ENCODE measurements at regions of chr10 and their contacts with region 1.

Region 1: DNA sequence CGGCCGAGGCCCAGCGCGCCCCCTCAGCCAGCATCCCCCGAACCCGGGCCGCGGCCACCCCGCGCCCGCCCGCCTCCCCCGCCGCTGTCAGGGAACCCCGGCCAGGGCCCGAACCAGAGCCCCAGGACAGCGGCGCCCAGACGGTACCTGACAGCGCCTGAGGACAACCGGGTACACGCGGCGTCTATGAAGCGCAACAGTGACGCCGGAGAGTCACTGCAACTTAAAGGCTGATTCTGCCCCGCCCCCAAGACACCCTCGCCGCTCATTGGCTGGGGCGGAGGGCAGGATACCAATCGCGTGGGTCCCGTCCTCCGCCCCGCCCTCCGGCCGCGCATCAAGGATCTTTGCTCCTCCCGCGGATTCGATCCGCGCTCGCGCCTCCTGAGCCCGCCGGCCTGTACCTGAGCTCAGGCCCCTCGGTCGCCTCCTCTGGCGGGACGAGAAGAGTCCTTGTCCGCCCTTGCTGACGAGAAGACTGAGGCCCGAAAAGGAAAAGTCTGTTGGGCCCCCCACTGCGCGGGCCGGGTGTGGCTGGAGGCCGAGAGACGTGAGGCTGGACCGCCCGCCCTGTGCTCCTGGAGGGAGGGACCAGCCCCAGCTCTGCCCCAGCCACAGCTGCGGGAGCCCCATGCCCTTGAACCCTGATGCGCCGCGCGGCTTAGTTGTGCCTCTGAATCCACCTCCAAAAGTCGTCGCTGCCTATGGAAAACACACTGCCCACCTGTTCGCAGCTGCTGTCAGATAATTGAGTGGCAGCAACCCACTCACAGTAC is at the start of gene OAT:
- DNase-seq: peak; percentile 99
- ATAC-seq: peak; percentile 98
- H3K4me3 Mint-ChIP-seq: peak within 1 kb of the TSS; percentile 78
- H3K27ac Mint-ChIP-seq: peak within 1 kb of the TSS; percentile 21
- H3K4me1 Mint-ChIP-seq: peaks cover 16% of the 10 kb centered on the region
- H3K27me3 Mint-ChIP-seq: no peaks in the 10 kb centered on the region
- total RNA-seq, gene OAT: 36.5 to 39.6 TPM

Region 2: DNA sequence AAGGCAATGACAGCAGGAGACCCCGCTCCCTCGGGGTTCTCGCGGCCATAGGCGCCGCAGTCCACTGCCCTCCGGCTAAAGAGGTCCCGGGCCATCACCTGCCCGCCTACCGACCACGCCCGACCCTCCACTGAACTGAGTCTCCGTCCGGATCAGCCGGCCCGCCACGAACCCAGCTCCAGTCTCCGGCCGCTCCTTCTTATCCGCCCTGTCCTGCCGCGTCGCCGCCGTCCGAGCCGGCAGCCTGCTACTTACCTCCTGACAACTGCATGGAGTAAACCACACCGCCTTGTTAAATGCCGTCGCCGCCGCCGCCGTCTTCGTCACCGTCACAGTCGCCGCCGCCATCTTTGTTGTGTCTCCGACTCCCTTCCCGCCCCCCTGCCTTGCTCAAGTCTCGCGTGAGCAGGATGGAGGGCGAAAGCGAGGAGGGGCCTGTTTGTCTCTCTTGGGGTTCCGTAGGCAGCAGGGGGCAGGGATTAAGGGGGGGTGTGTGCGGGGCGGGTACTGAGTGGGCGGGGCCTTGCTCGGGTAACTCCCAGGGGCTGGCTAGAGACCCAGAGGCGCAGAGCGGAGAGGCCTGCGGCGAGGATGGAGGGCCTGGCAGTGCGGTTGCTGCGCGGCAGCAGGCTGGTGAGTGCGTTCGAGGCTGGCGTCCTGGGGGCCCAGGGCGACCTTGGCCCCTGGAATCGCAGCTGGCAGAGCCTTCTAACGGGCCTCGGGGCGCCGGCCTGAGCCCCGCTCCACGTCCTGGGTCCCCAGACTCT is 1410.3 kb before region 1 on chr10 and contains the starts of genes ACADSB and IKZF5:
- CTCF ChIA-PET with region 1: no interaction called
- POLR2A ChIA-PET with region 1: no interaction called
- intact Hi-C with region 1: loop called in 1 of 2 experiments (anchors 10 kb)
- DNase-seq: peak; percentile 98
- ATAC-seq: peak; percentile 87
- H3K4me3 Mint-ChIP-seq: peak within 1 kb of the TSS; percentile 95
- H3K27ac Mint-ChIP-seq: peak within 1 kb of the TSS; percentile 99
- H3K4me1 Mint-ChIP-seq: peaks cover 42% of the 10 kb centered on the region
- H3K27me3 Mint-ChIP-seq: no peaks in the 10 kb centered on the region
- total RNA-seq, gene ACADSB: 24.0 to 25.5 TPM
- total RNA-seq, gene IKZF5: 9.4 to 14.1 TPM

Region 3: GRCh38 chr10:124194199-124194824 is 224.6 kb before region 1 on chr10:
- CTCF ChIA-PET with region 1: no interaction called
- POLR2A ChIA-PET with region 1: no interaction called
- intact Hi-C with region 1: no loop called
- DNase-seq: no peak
- ATAC-seq: no peak
- H3K4me3 Mint-ChIP-seq: no peak overlapping the region
- H3K27ac Mint-ChIP-seq: no peak overlapping the region
- H3K4me1 Mint-ChIP-seq: no peaks in the 10 kb centered on the region
- H3K27me3 Mint-ChIP-seq: peaks cover 16% of the 10 kb centered on the region

Region 4: GRCh38 chr10:124403548-124403947 is 15.4 kb before region 1 on chr10:
- CTCF ChIA-PET with region 1: interaction called, 13 read pairs
- POLR2A ChIA-PET with region 1: interaction called, 3 read pairs
- intact Hi-C with region 1: loop called in 1 of 2 experiments (anchors 1 kb)
- DNase-seq: peak; percentile 27
- ATAC-seq: peak; percentile 100
- H3K4me3 Mint-ChIP-seq: no peak overlapping the region
- H3K27ac Mint-ChIP-seq: peak overlapping the region; percentile 16
- H3K4me1 Mint-ChIP-seq: peaks cover 8% of the 10 kb centered on the region
- H3K27me3 Mint-ChIP-seq: no peaks in the 10 kb centered on the region

Region 5: GRCh38 chr10:124802313-124802675 is 383.4 kb after region 1 on chr10:
- CTCF ChIA-PET with region 1: no interaction called
- POLR2A ChIA-PET with region 1: no interaction called
- intact Hi-C with region 1: loop called in 1 of 2 experiments (anchors 5 kb)
- DNase-seq: no peak
- ATAC-seq: peak; percentile 43
- H3K4me3 Mint-ChIP-seq: peak overlapping the region; percentile 91
- H3K27ac Mint-ChIP-seq: peak overlapping the region; percentile 90
- H3K4me1 Mint-ChIP-seq: peaks cover 19% of the 10 kb centered on the region
- H3K27me3 Mint-ChIP-seq: no peaks in the 10 kb centered on the region

Region 6: GRCh38 chr10:125719146-125720001 is 1300.5 kb after region 1 on chr10 and contains the start of gene EDRF1:
- CTCF ChIA-PET with region 1: no interaction called
- POLR2A ChIA-PET with region 1: no interaction called
- intact Hi-C with region 1: loop called in 1 of 2 experiments (anchors 1 kb)
- DNase-seq: peak; percentile 99
- ATAC-seq: peak; percentile 97
- H3K4me3 Mint-ChIP-seq: peak within 1 kb of the TSS; percentile 82
- H3K27ac Mint-ChIP-seq: peak within 1 kb of the TSS; percentile 92
- H3K4me1 Mint-ChIP-seq: peaks cover 26% of the 10 kb centered on the region
- H3K27me3 Mint-ChIP-seq: no peaks in the 10 kb centered on the region
- total RNA-seq, gene EDRF1: 29.6 to 30.8 TPM